ENCODE measurements at regions of chr12 and their contacts with region 1.

Region 1: GRCh38 chr12:50055831-50056638 is 1.4 kb upstream of the ASIC1 start:
- DNase-seq: peak; percentile 39
- ATAC-seq: peak; percentile 83
- H3K4me3 Mint-ChIP-seq: peak overlapping the region; percentile 70
- H3K27ac Mint-ChIP-seq: no peak overlapping the region
- H3K4me1 Mint-ChIP-seq: peaks cover 16% of the 10 kb centered on the region
- H3K27me3 Mint-ChIP-seq: peaks cover 47% of the 10 kb centered on the region
- CTCF ChIP-seq: peak; percentile 81

Region 2: GRCh38 chr12:49776413-49776812 is 279.6 kb before region 1 on chr12:
- CTCF ChIA-PET with region 1: no interaction called
- POLR2A ChIA-PET with region 1: no interaction called
- intact Hi-C with region 1: loop called (anchors 5 kb)
- DNase-seq: no peak
- ATAC-seq: peak; percentile 85
- H3K4me3 Mint-ChIP-seq: no peak overlapping the region
- H3K27ac Mint-ChIP-seq: no peak overlapping the region
- H3K4me1 Mint-ChIP-seq: peaks cover 13% of the 10 kb centered on the region
- H3K27me3 Mint-ChIP-seq: peaks cover 17% of the 10 kb centered on the region
- CTCF ChIP-seq: no peak

Region 3: GRCh38 chr12:49866859-49867579 is 189.0 kb before region 1 on chr12:
- CTCF ChIA-PET with region 1: no interaction called
- POLR2A ChIA-PET with region 1: no interaction called
- intact Hi-C with region 1: loop called (anchors 1 kb)
- DNase-seq: peak; percentile 67
- ATAC-seq: peak; percentile 90
- H3K4me3 Mint-ChIP-seq: no peak overlapping the region
- H3K27ac Mint-ChIP-seq: no peak overlapping the region
- H3K4me1 Mint-ChIP-seq: no peaks in the 10 kb centered on the region
- H3K27me3 Mint-ChIP-seq: peaks cover 6% of the 10 kb centered on the region
- CTCF ChIP-seq: no peak

Region 4: DNA sequence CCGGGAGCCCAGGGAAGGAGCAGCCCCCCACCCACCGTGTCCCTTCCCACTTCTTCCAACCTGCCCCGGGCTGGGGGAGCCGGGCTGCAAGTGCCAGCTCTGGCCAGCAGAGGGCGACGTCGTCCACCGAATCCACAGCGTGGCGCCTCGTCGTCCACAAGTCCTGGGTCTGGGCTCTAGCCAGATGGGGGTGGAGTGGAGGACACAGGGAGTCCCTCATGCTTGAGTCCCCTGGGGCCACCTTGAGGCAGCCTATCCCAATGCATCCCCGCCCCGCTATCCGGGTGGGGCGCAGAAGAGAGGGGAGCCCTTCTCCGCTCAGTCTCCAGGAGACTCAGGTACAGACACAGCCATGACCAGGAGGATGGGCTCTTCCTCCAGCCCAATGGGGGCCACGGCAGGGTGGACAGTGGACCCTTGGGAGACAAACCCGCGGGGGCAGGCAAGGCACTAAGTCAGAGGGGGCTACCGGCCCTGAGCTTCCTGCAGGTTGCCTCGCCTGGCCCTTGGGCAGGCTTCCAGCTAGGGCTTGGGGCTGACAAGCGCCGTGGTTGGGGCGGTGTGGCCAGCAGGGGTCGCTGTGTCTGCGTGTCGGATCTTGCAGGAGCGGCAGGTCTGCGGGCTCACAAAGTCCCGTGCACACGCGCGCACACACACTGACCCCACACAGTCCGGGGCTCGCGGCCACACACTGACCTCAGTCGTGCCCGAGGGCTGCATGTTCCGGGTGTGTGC is 88.8 kb before region 1 on chr12:
- CTCF ChIA-PET with region 1: interaction called, 45 read pairs
- POLR2A ChIA-PET with region 1: interaction called, 3 read pairs
- intact Hi-C with region 1: loop called (anchors 1 kb)
- DNase-seq: peak; percentile 86
- ATAC-seq: peak; percentile 89
- H3K4me3 Mint-ChIP-seq: peak overlapping the region; percentile 71
- H3K27ac Mint-ChIP-seq: no peak overlapping the region
- H3K4me1 Mint-ChIP-seq: peaks cover 4% of the 10 kb centered on the region
- H3K27me3 Mint-ChIP-seq: peaks cover 39% of the 10 kb centered on the region
- CTCF ChIP-seq: peak; percentile 51

Region 5: GRCh38 chr12:50038336-50038735 is 17.7 kb before region 1 on chr12:
- CTCF ChIA-PET with region 1: interaction called, 14 read pairs
- POLR2A ChIA-PET with region 1: no interaction called
- intact Hi-C with region 1: loop called (anchors 1 kb)
- DNase-seq: no peak
- ATAC-seq: no peak
- H3K4me3 Mint-ChIP-seq: no peak overlapping the region
- H3K27ac Mint-ChIP-seq: no peak overlapping the region
- H3K4me1 Mint-ChIP-seq: peaks cover 4% of the 10 kb centered on the region
- H3K27me3 Mint-ChIP-seq: peaks cover 2% of the 10 kb centered on the region
- CTCF ChIP-seq: no peak

Region 6: GRCh38 chr12:50043854-50044253 is 12.2 kb before region 1 on chr12:
- CTCF ChIA-PET with region 1: interaction called, 14 read pairs
- POLR2A ChIA-PET with region 1: no interaction called
- intact Hi-C with region 1: loop called (anchors 1 kb)
- DNase-seq: no peak
- ATAC-seq: no peak
- H3K4me3 Mint-ChIP-seq: no peak overlapping the region
- H3K27ac Mint-ChIP-seq: no peak overlapping the region
- H3K4me1 Mint-ChIP-seq: no peaks in the 10 kb centered on the region
- H3K27me3 Mint-ChIP-seq: no peaks in the 10 kb centered on the region
- CTCF ChIP-seq: no peak

Region 7: DNA sequence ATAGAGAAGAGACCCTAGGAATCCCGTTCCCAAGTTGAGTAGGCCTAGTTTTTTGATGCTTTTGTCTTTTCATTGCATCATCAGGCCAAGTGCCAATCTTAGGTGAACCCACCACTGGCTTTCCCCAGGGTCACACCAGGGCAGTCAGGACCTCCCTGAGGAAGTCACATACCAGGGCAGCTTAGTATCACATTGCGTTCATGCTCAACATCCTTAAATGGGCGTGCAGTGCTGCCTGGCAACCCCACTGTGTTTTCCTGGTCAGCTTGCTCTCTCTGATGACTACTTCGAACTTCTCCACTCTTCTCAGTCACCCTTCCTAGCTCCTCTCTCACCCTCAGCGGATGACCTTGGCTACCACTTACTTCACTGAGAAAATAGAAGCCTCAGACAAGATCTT is 10.4 kb after region 1 on chr12:
- CTCF ChIA-PET with region 1: interaction called, 15 read pairs
- POLR2A ChIA-PET with region 1: interaction called, 3 read pairs
- intact Hi-C with region 1: no loop called
- DNase-seq: no peak
- ATAC-seq: no peak
- H3K4me3 Mint-ChIP-seq: no peak overlapping the region
- H3K27ac Mint-ChIP-seq: no peak overlapping the region
- H3K4me1 Mint-ChIP-seq: peaks cover 4% of the 10 kb centered on the region
- H3K27me3 Mint-ChIP-seq: peaks cover 10% of the 10 kb centered on the region
- CTCF ChIP-seq: no peak

Measured in activated B cell treated with CpG ODN at 0.5 μM for 24 hours (primary cell).